PC-9 (cell line): ENCODE measurements at regions of chr3 and their contacts with region 1.

Region 1: GRCh38 chr3:107222907-107223306 is 154.3 kb upstream of the CCDC54 start:
- DNase-seq: peak in 1 of 2 experiments; percentile 85
- H3K4me3 ChIP-seq: no peak overlapping the region
- H3K27ac ChIP-seq: peak overlapping the region; percentile 31
- H3K4me1 ChIP-seq: peaks cover 38% of the 10 kb centered on the region
- H3K27me3 ChIP-seq: no peaks in the 10 kb centered on the region
- CTCF ChIP-seq: no peak

Region 2: GRCh38 chr3:107098864-107099263 is 124.0 kb before region 1 on chr3:
- CTCF ChIA-PET with region 1: no interaction called
- POLR2A ChIA-PET with region 1: interaction called, 12 read pairs
- intact Hi-C with region 1: no loop called
- DNase-seq: no peak
- H3K4me3 ChIP-seq: no peak overlapping the region
- H3K27ac ChIP-seq: no peak overlapping the region
- H3K4me1 ChIP-seq: no peaks in the 10 kb centered on the region
- H3K27me3 ChIP-seq: peaks cover 4% of the 10 kb centered on the region; the same call in 1 of the 2 replicates
- CTCF ChIP-seq: no peak

Region 3: DNA sequence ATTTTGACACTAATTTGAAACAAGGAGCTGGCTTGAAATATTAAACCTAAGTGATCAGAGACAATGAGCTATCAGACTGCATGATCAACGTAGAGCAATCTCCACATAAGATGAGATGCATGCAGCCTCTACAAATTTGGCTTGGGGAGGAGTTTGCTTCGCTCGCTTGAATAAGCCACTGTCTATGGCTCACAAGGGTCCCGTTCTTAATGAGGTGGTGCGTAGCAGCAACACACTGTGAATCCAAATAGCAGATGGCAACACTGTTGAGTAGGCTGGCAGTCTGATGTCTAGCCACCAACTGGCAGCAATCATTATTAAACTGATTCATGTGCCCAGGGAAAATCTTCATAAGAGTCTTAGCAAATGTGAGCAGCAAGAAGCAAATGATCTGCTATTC is 28.9 kb after region 1 on chr3:
- CTCF ChIA-PET with region 1: no interaction called
- POLR2A ChIA-PET with region 1: no interaction called
- intact Hi-C with region 1: no loop called
- DNase-seq: no peak
- H3K4me3 ChIP-seq: no peak overlapping the region
- H3K27ac ChIP-seq: no peak overlapping the region
- H3K4me1 ChIP-seq: no peaks in the 10 kb centered on the region
- H3K27me3 ChIP-seq: no peaks in the 10 kb centered on the region
- CTCF ChIP-seq: no peak

Region 4: GRCh38 chr3:107514453-107514852 is 291.5 kb after region 1 on chr3:
- CTCF ChIA-PET with region 1: no interaction called
- POLR2A ChIA-PET with region 1: no interaction called
- intact Hi-C with region 1: no loop called
- DNase-seq: no peak
- H3K4me3 ChIP-seq: no peak overlapping the region
- H3K27ac ChIP-seq: no peak overlapping the region
- H3K4me1 ChIP-seq: no peaks in the 10 kb centered on the region
- H3K27me3 ChIP-seq: no peaks in the 10 kb centered on the region
- CTCF ChIP-seq: no peak